Sigmoid colon (tissue), 7 donors: ENCODE measurements at regions of chr4 and their contacts with region 1.

Region 1: DNA sequence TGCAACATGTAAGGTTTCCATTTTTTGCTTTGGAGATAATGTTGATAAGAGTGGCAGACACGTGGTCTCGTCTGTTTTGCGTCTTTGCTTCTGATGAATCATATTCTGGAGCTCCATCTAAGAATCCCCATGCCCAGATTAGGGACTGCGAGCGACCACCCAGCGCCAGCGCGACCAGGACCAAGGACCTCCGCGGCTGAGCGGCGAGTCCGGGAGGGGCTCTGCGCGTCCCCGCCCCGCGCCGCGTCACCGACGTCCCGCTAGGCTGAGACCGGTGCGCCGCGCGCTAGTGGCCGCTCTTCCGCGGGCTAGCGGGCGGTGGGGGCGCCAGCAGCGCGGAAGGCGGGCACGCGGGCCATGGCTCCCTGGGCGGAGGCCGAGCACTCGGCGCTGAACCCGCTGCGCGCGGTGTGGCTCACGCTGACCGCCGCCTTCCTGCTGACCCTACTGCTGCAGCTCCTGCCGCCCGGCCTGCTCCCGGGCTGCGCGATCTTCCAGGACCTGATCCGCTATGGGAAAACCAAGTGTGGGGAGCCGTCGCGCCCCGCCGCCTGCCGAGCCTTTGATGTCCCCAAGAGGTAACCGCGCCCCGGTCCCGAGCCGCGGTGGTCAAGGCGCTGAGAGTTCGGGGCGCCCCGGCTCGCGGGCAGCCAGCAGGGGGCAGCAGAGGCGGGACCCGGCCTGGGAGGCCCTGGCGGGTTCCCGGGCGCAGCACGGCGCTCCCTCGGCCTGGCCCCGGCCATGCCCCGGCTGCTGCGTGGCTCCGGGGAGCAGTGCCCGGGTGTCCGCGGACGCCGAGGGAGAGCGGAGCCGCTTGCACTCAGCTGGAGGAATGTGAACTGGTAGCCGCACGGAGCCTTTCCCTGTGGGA is at the start of gene SRD5A3:
- DNase-seq: peak; percentile 92
- H3K4me3 ChIP-seq: peak within 1 kb of the TSS; percentile 63 to 87 (median 74)
- H3K27ac ChIP-seq: peak within 1 kb of the TSS; percentile 93 to 99 (median 98)
- H3K4me1 ChIP-seq: peaks cover 0 to 22% (median 15%) of the 10 kb centered on the region in 4 donors
- H3K27me3 ChIP-seq: no peaks in the 10 kb centered on the region
- CTCF ChIP-seq: peak; percentile 78 to 97 (median 80)
- EP300 ChIP-seq: no peak
- POLR2A ChIP-seq: no peak
- total RNA-seq, gene SRD5A3: 2.2 to 5.4 (median 3.3) TPM

Region 2: GRCh38 chr4:55089916-55090315 is 256.3 kb before region 1 on chr4:
- intact Hi-C with region 1: no loop called
- DNase-seq: no peak
- H3K4me3 ChIP-seq: no peak overlapping the region
- H3K27ac ChIP-seq: no peak overlapping the region
- H3K4me1 ChIP-seq: no peaks in the 10 kb centered on the region
- H3K27me3 ChIP-seq: no peaks in the 10 kb centered on the region
- CTCF ChIP-seq: no peak
- EP300 ChIP-seq: no peak
- POLR2A ChIP-seq: no peak

Region 3: GRCh38 chr4:55269470-55269869 is 76.7 kb before region 1 on chr4:
- intact Hi-C with region 1: no loop called
- DNase-seq: no peak
- H3K4me3 ChIP-seq: no peak overlapping the region
- H3K27ac ChIP-seq: no peak overlapping the region
- H3K4me1 ChIP-seq: no peaks in the 10 kb centered on the region
- H3K27me3 ChIP-seq: no peaks in the 10 kb centered on the region
- CTCF ChIP-seq: no peak
- EP300 ChIP-seq: no peak
- POLR2A ChIP-seq: no peak

Region 4: GRCh38 chr4:55395529-55396307 is 49.5 kb after region 1 on chr4 and contains the start of gene TMEM165:
- intact Hi-C with region 1: loop called (anchors 1 kb)
- DNase-seq: peak; percentile 96
- H3K4me3 ChIP-seq: peak within 1 kb of the TSS; percentile 78 to 99 (median 86)
- H3K27ac ChIP-seq: peak within 1 kb of the TSS; percentile 96 to 100 (median 100)
- H3K4me1 ChIP-seq: peaks cover 0 to 38% (median 31%) of the 10 kb centered on the region in 4 donors
- H3K27me3 ChIP-seq: no peaks in the 10 kb centered on the region
- CTCF ChIP-seq: no peak
- EP300 ChIP-seq: no peak
- POLR2A ChIP-seq: peak; percentile 86 to 88
- total RNA-seq, gene TMEM165: 144 to 219 (median 165) TPM

Region 5: DNA sequence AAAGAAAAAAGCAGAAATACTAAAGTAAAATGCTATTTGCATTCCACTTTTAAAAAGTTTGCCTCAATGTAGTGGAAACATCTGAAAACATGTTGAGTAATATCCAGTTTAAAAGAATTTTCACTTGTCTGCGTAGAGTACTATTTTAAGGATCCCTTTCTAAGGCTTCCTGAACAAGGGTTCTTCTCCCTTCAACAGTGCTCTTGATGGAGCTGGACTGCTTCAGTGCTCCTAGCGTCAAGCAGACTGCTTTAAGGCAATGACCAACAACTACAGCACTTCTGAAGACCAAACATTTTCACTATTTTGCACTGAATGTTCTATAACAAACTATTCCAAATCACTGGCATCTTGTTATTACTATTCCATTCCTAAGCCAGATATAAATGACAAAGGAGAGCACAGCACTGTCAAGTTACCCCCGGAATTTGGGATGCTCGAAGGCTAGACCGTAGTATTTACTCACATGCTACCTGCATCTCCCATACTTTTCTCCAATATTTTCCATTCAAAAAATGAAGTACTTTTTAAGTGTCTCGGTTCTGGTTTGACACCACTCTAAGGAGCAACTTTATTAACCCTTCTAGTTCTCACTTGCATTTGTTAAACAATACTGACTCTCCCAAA is 85.6 kb after region 1 on chr4:
- intact Hi-C with region 1: loop called (anchors 5 kb)
- DNase-seq: no peak
- H3K4me3 ChIP-seq: no peak overlapping the region
- H3K27ac ChIP-seq: no peak overlapping the region
- H3K4me1 ChIP-seq: no peaks in the 10 kb centered on the region
- H3K27me3 ChIP-seq: no peaks in the 10 kb centered on the region
- CTCF ChIP-seq: no peak
- EP300 ChIP-seq: no peak
- POLR2A ChIP-seq: no peak

Region 6: DNA sequence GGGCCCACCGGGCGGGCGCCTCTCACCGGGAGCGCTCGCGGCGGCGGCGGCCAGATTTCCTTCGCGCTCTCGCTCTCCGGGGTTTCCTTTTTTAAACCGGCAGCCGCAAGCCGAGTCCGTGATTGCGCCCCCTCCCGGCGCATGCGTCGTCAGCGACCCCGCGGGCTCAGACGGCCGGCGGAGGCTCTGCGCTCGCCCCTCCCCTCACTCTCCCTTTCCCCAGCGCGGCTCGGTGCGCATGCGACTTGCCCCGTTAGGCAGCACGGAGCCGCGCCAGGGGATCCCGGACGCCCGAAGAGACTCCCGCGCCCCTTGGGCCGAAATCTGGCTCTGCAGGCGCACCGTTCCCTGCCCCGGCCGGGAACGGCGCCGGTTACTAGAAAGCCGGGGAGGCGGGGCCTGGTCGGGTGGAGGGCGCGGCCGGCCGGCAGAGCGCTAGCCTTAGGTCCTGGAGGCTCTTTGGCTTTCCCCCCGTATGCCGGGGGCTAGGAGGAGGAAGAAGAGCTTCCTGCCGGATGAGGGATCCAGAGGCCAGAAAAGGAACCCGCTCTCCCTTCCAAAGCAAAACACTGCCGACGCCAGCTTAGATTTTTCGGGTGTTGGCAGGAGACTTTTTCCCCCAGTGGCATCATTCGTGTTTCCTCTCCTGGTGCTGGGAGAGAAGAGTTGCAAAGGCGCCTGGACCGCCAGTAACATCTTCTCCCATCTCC is 200.7 kb after region 1 on chr4 and contains the start of gene CLOCK:
- intact Hi-C with region 1: loop called (anchors 2 kb)
- DNase-seq: peak; percentile 92
- H3K4me3 ChIP-seq: peak within 1 kb of the TSS; percentile 61 to 98 (median 86)
- H3K27ac ChIP-seq: peak within 1 kb of the TSS; percentile 91 to 99 (median 98)
- H3K4me1 ChIP-seq: peaks cover 3 to 24% (median 10%) of the 10 kb centered on the region in 4 donors
- H3K27me3 ChIP-seq: no peaks in the 10 kb centered on the region
- CTCF ChIP-seq: peak; percentile 22 to 58 (median 46)
- EP300 ChIP-seq: no peak
- POLR2A ChIP-seq: peak; percentile 51 to 63
- total RNA-seq, gene CLOCK: 22.5 to 27.5 (median 24.0) TPM

Region 7: DNA sequence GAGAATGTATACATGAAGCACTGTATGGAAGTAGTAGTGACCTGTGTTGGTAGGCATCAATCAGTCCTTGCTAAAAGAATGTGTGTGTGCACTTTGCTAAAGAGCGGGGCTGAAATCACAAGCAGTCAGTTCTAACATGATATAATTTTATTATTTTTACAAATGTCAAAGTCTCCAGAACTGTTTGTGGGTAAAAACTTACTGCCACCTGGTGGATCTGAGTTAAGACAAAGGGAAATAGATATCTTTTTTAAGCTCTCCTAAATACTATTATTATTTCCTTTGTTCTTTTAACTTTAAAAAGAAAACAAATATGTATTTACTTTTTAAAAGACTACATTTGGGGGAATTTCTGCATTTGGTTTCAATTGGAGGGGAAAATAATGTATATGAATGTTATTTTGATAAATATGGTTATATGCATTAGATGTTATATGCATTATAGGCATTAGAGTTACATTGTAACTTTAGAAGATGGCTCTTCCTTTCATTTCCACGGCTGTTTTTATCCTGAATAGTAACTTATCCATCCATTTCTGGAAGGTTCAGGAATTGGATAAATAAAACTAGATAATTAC is 208.3 kb after region 1 on chr4:
- intact Hi-C with region 1: loop called (anchors 2 kb)
- DNase-seq: no peak
- H3K4me3 ChIP-seq: no peak overlapping the region
- H3K27ac ChIP-seq: no peak overlapping the region
- H3K4me1 ChIP-seq: peaks cover 0 to 15% (median 4%) of the 10 kb centered on the region in 4 donors
- H3K27me3 ChIP-seq: no peaks in the 10 kb centered on the region
- CTCF ChIP-seq: peak in 3 of 4 experiments; percentile 8 to 44 (median 20)
- EP300 ChIP-seq: no peak
- POLR2A ChIP-seq: no peak

Region 8: GRCh38 chr4:55853484-55854046 is 507.4 kb after region 1 on chr4 and contains the start of gene EXOC1:
- intact Hi-C with region 1: loop called (anchors 5 kb)
- DNase-seq: peak; percentile 99
- H3K4me3 ChIP-seq: peak within 1 kb of the TSS; percentile 73 to 93 (median 86)
- H3K27ac ChIP-seq: peak within 1 kb of the TSS; percentile 85 to 88 (median 88)
- H3K4me1 ChIP-seq: peaks cover 0 to 21% (median 17%) of the 10 kb centered on the region in 4 donors
- H3K27me3 ChIP-seq: no peaks in the 10 kb centered on the region
- CTCF ChIP-seq: no peak
- EP300 ChIP-seq: peak in 1 of 4 donors; percentile 38
- POLR2A ChIP-seq: peak in 1 of 2 donors; percentile 32
- total RNA-seq, gene EXOC1: 14.5 to 49.0 (median 21.7) TPM

Region 9: GRCh38 chr4:56907489-56908205 is 1561.4 kb after region 1 on chr4 and contains the start of gene REST:
- intact Hi-C with region 1: loop called (anchors 5 kb)
- DNase-seq: peak; percentile 87
- H3K4me3 ChIP-seq: peak within 1 kb of the TSS; percentile 75 to 98 (median 94)
- H3K27ac ChIP-seq: peak within 1 kb of the TSS; percentile 89 to 97 (median 95)
- H3K4me1 ChIP-seq: peaks cover 0 to 30% (median 27%) of the 10 kb centered on the region in 4 donors
- H3K27me3 ChIP-seq: no peaks in the 10 kb centered on the region
- CTCF ChIP-seq: no peak
- EP300 ChIP-seq: no peak
- POLR2A ChIP-seq: no peak
- total RNA-seq, gene REST: 23.7 to 32.8 (median 26.3) TPM